Activated B cell treated with CpG ODN at 0.5 μM for 24 hours (primary cell): ENCODE measurements at regions of chr3 and their contacts with region 1.

Region 1: GRCh38 chr3:187745201-187746058 is at the start of gene BCL6:
- DNase-seq: peak; percentile 77
- ATAC-seq: peak; percentile 60
- H3K4me3 Mint-ChIP-seq: peak within 1 kb of the TSS; percentile 98
- H3K27ac Mint-ChIP-seq: peak within 1 kb of the TSS; percentile 98
- H3K4me1 Mint-ChIP-seq: peaks cover 79% of the 10 kb centered on the region
- H3K27me3 Mint-ChIP-seq: no peaks in the 10 kb centered on the region
- CTCF ChIP-seq: no peak
- total RNA-seq, gene BCL6: 100 and 112 TPM in 2 replicates

Region 2: DNA sequence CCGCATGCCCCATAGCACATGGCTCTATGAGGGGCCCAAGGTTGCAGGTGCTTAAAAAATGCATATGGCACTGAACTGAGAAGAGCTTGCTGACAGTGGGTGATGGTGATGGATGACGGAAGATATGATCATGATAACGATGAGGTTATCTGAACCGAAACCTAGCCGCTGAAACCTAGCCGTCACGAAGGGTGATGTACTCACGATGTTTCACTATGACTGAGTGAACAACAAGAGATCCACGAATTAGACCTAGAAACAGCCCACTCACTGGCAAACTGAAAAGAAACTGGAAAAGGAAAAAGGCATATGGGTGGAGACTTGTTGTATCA is 57.5 kb after region 1 on chr3:
- CTCF ChIA-PET with region 1: interaction called, 3 read pairs
- POLR2A ChIA-PET with region 1: interaction called, 6 read pairs
- intact Hi-C with region 1: loop called (anchors 1 kb)
- DNase-seq: no peak
- ATAC-seq: peak; percentile 76
- H3K4me3 Mint-ChIP-seq: peak overlapping the region; percentile 39
- H3K27ac Mint-ChIP-seq: peak overlapping the region; percentile 54
- H3K4me1 Mint-ChIP-seq: peaks cover 44% of the 10 kb centered on the region
- H3K27me3 Mint-ChIP-seq: no peaks in the 10 kb centered on the region
- CTCF ChIP-seq: no peak

Region 3: GRCh38 chr3:188061133-188061532 is 315.7 kb after region 1 on chr3:
- CTCF ChIA-PET with region 1: interaction called, 4 read pairs
- POLR2A ChIA-PET with region 1: interaction called, 4 read pairs
- intact Hi-C with region 1: loop called (anchors 1 kb)
- DNase-seq: no peak
- ATAC-seq: peak; percentile 96
- H3K4me3 Mint-ChIP-seq: no peak overlapping the region
- H3K27ac Mint-ChIP-seq: no peak overlapping the region
- H3K4me1 Mint-ChIP-seq: peaks cover 6% of the 10 kb centered on the region
- H3K27me3 Mint-ChIP-seq: no peaks in the 10 kb centered on the region
- CTCF ChIP-seq: no peak

Region 4: DNA sequence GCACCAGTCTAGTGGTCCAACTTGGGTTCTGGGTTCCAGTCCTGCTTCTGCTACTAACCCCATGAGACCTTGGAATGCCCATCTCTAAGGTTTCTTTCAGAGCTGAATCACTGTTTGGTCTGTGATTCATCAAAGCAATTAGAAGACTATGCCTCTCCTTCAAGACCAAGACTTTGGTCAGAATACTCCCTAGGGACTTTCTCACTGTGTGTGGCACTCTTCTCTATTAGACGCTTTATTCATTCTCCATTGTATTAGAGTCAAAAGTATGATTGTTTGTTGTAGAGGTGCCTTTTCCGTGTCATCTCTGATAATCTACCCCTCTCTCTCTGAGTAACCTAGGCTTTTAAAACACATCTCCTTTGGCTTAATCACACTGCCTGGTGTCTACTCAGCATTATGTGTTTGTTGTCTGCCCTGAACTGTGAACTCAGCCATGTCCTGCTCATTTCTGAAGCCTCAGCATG is 499.0 kb after region 1 on chr3:
- CTCF ChIA-PET with region 1: interaction called, 7 read pairs
- POLR2A ChIA-PET with region 1: interaction called, 7 read pairs
- intact Hi-C with region 1: loop called (anchors 10 kb)
- DNase-seq: no peak
- ATAC-seq: peak; percentile 78
- H3K4me3 Mint-ChIP-seq: peak overlapping the region; percentile 24
- H3K27ac Mint-ChIP-seq: peak overlapping the region; percentile 62
- H3K4me1 Mint-ChIP-seq: peaks cover 74% of the 10 kb centered on the region
- H3K27me3 Mint-ChIP-seq: no peaks in the 10 kb centered on the region
- CTCF ChIP-seq: no peak

Region 5: GRCh38 chr3:188339410-188340295 is 594.2 kb after region 1 on chr3:
- CTCF ChIA-PET with region 1: no interaction called
- POLR2A ChIA-PET with region 1: interaction called, 12 read pairs
- intact Hi-C with region 1: no loop called
- DNase-seq: no peak
- ATAC-seq: peak; percentile 87
- H3K4me3 Mint-ChIP-seq: peak overlapping the region; percentile 55
- H3K27ac Mint-ChIP-seq: peak overlapping the region; percentile 87
- H3K4me1 Mint-ChIP-seq: peaks cover 49% of the 10 kb centered on the region
- H3K27me3 Mint-ChIP-seq: no peaks in the 10 kb centered on the region
- CTCF ChIP-seq: no peak

Region 6: DNA sequence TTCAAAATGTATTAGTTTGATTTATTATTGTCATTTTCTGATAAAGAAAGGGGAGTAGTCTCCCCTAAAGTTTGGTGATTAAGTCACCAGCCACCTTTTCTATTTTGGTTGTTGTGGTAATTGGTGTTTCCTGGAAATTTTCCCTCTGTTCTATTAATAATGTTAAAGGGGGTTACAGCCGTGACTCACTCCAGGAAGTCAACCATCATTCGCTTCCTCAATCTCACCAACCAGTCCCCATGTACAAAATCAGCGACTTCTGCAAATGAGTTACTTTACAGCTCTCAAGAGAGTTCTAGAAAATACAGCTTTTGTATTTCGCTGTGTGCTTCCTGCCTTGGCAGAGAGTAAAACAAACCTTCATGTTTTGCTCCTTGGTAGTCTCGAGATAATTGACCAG is 693.6 kb after region 1 on chr3:
- CTCF ChIA-PET with region 1: interaction called, 8 read pairs
- POLR2A ChIA-PET with region 1: interaction called, 23 read pairs
- intact Hi-C with region 1: loop called (anchors 2 kb)
- DNase-seq: no peak
- ATAC-seq: peak; percentile 85
- H3K4me3 Mint-ChIP-seq: peak overlapping the region; percentile 52
- H3K27ac Mint-ChIP-seq: peak overlapping the region; percentile 88
- H3K4me1 Mint-ChIP-seq: peaks cover 95% of the 10 kb centered on the region
- H3K27me3 Mint-ChIP-seq: no peaks in the 10 kb centered on the region
- CTCF ChIP-seq: no peak

Region 7: GRCh38 chr3:188749010-188749617 is 1003.7 kb after region 1 on chr3:
- CTCF ChIA-PET with region 1: interaction called, 45 read pairs
- POLR2A ChIA-PET with region 1: interaction called, 94 read pairs
- intact Hi-C with region 1: loop called (anchors 1 kb)
- DNase-seq: no peak
- ATAC-seq: no peak
- H3K4me3 Mint-ChIP-seq: no peak overlapping the region
- H3K27ac Mint-ChIP-seq: peak overlapping the region; percentile 55
- H3K4me1 Mint-ChIP-seq: peaks cover 43% of the 10 kb centered on the region
- H3K27me3 Mint-ChIP-seq: no peaks in the 10 kb centered on the region
- CTCF ChIP-seq: no peak